Activated CD4-positive, alpha-beta T cell treated with anti-CD3 and anti-CD28 coated beads, Interleukin-2, amount 10 ng/mL, durations not matched to agents 24 days and 14 days (primary cell): ENCODE measurements at regions of chr12 and their contacts with region 1.

Region 1: DNA sequence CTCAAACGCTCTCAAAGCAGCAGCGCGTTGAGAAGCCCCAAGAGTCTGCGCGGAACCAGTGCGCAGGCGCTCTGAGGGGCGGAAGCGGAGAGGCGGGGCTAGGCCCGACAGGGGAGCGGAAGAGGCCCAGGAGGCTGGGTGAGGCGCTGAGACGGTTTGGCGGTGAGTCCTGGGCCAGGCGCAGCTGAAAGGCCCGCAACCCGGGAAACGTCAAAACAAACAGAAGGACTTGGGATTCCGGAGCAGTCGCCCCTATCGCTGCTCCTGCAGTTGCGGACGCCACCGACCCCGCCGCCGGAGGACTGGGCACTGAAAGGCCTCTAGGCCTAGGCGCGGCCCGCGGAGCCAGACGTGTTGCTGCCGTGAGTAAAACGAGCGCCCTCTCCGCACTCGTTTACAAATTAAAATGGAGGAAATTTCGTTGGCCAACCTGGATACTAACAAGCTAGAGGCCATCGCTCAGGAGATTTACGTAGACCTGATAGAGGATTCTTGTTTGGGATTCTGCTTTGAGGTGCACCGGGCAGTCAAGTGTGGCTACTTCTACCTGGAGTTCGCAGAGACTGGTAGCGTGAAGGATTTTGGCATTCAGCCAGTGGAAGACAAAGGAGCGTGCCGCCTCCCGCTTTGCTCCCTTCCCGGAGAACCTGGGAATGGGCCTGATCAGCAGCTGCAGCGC is at the start of gene ATXN7L3B:
- DNase-seq: peak; percentile 99
- H3K4me3 Mint-ChIP-seq: peak within 1 kb of the TSS; percentile 98
- H3K27ac Mint-ChIP-seq: peak within 1 kb of the TSS; percentile 97
- H3K4me1 Mint-ChIP-seq: peaks cover 40% of the 10 kb centered on the region
- H3K27me3 Mint-ChIP-seq: no peaks in the 10 kb centered on the region
- total RNA-seq, gene ATXN7L3B: 23.9 and 24.6 TPM in 2 replicates

Region 2: GRCh38 chr12:74021937-74022336 is 515.9 kb before region 1 on chr12:
- intact Hi-C with region 1: loop called (anchors 1 kb)
- DNase-seq: peak; percentile 60
- H3K4me3 Mint-ChIP-seq: no peak overlapping the region
- H3K27ac Mint-ChIP-seq: no peak overlapping the region
- H3K4me1 Mint-ChIP-seq: no peaks in the 10 kb centered on the region
- H3K27me3 Mint-ChIP-seq: no peaks in the 10 kb centered on the region

Region 3: DNA sequence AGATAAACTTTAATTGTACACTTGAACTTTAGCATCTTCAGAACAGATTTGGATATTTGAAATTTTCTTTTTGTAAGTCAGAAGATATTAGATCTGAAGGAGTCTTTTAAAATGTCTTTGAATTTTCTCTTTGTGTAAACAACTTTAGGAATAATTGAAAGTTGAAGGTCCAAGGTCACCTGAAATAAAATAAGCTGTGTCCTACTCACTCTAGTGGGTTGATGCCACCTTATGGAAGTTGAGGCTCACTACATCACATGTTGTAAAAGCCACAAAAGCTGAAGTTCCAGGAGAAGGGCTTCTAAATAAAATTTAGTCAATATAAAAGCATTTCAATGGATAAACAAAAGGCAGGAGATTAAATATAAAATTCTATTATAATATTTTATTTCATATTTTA is 122.2 kb before region 1 on chr12:
- intact Hi-C with region 1: loop called (anchors 10 kb)
- DNase-seq: no peak
- H3K4me3 Mint-ChIP-seq: no peak overlapping the region
- H3K27ac Mint-ChIP-seq: no peak overlapping the region
- H3K4me1 Mint-ChIP-seq: no peaks in the 10 kb centered on the region
- H3K27me3 Mint-ChIP-seq: no peaks in the 10 kb centered on the region

Region 4: GRCh38 chr12:75020068-75020557 is 482.3 kb after region 1 on chr12:
- intact Hi-C with region 1: no loop called
- DNase-seq: no peak
- H3K4me3 Mint-ChIP-seq: no peak overlapping the region
- H3K27ac Mint-ChIP-seq: no peak overlapping the region
- H3K4me1 Mint-ChIP-seq: no peaks in the 10 kb centered on the region
- H3K27me3 Mint-ChIP-seq: no peaks in the 10 kb centered on the region